CD4-positive, alpha-beta memory T cell (primary cell): ENCODE measurements at regions of chr17 and their contacts with region 1.

Region 1: DNA sequence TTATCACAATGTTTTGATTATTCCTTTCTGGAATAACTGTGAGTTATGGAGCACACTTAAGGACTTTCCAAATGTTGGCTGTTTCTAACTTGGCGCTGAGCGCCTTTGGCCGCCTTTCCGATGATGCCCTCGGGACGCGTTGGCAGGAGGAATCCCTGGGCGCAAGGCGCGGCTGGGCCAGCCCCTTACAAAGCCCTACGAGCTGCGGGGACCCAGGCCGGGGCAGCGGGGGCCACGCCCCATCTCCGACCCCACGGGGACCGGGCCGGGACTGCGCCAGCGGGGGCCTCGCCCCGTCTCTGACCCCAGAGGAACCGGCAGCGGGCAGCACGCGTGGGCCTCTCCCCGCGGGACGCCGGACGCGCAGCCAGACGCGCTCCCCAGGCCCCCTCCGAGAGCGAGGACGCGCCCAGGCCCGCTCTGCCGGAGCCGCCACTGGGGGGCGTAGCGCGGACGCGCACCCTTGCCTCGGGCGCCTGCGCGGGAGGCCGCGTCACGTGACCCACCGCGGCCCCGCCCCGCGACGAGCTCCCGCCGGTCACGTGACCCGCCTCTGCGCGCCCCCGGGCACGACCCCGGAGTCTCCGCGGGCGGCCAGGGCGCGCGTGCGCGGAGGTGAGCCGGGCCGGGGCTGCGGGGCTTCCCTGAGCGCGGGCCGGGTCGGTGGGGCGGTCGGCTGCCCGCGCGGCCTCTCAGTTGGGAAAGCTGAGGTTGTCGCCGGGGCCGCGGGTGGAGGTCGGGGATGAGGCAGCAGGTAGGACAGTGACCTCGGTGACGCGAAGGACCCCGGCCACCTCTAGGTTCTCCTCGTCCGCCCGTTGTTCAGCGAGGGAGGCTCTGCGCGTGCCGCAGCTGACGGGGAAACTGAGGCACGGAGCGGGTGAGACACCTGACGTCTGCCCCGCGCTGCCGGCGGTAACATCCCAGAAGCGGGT is at the start of gene GAA:
- DNase-seq: peak; percentile 79 to 93 (median 89)
- H3K4me3 ChIP-seq: peak within 1 kb of the TSS; percentile 52 to 82
- H3K4me3 Mint-ChIP-seq: peak within 1 kb of the TSS; percentile 87 to 92 (median 90)
- H3K27ac ChIP-seq: peak within 1 kb of the TSS; percentile 76
- H3K27ac Mint-ChIP-seq: peak within 1 kb of the TSS; percentile 80 to 94 (median 88)
- H3K4me1 ChIP-seq: peaks cover 20% of the 10 kb centered on the region
- H3K4me1 Mint-ChIP-seq: peaks cover 12 to 31% (median 16%) of the 10 kb centered on the region in 4 donors
- H3K27me3 ChIP-seq: no peaks in the 10 kb centered on the region
- H3K27me3 Mint-ChIP-seq: peaks cover 0 to 2% of the 10 kb centered on the region in 2 donors
- total RNA-seq, gene GAA: 41.1 to 44.8 TPM

Region 2: GRCh38 chr17:79883202-79883601 is 218.1 kb before region 1 on chr17:
- CTCF ChIA-PET with region 1: no interaction called
- POLR2A ChIA-PET with region 1: no interaction called
- intact Hi-C with region 1: no loop called
- DNase-seq: no peak
- H3K4me3 ChIP-seq: no peak overlapping the region
- H3K4me3 Mint-ChIP-seq: no peak overlapping the region
- H3K27ac ChIP-seq: no peak overlapping the region
- H3K27ac Mint-ChIP-seq: no peak overlapping the region
- H3K4me1 ChIP-seq: no peaks in the 10 kb centered on the region
- H3K4me1 Mint-ChIP-seq: no peaks in the 10 kb centered on the region
- H3K27me3 ChIP-seq: no peaks in the 10 kb centered on the region
- H3K27me3 Mint-ChIP-seq: peaks cover 28 to 43% of the 10 kb centered on the region in 2 donors

Region 3: DNA sequence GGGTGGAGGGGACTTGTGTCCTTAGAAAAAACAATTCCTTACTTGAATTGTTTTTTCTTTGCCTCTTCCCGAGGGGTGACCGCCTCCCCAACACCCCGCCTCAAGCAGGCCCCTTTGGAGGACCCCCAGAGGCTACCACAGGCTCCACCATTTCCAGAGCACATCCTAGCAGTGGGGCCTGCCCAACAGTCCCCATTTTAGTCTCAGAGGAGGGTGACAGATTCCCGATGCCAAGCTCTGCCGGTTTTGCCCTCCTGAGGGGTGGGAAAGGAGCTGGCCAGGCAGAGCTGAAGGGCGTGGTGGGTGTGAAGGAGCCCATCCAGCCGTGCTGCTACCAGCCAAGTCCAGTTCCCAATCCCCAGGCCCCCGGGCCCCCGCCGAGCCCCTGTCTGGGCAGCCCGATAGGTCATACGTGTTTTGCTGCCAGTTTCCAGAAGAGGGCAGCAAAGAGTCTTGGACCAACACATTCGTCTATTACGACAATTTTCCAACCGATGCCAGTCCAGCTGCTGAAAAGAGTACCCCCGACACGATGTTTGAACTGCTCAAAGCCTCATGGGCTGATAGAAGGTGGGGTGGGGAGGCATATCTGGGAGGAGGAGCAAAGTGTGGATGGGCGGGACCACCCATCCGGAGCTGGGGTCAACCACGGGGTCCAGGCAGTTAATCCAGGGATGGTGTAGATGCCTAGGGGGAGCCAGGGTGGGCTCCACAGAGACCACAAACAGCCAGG is 18.7 kb before region 1 on chr17:
- CTCF ChIA-PET with region 1: interaction called, 10 read pairs
- POLR2A ChIA-PET with region 1: interaction called, 4 read pairs
- intact Hi-C with region 1: no loop called
- DNase-seq: peak; percentile 50 to 67 (median 60)
- H3K4me3 ChIP-seq: no peak overlapping the region
- H3K4me3 Mint-ChIP-seq: no peak overlapping the region
- H3K27ac ChIP-seq: no peak overlapping the region
- H3K27ac Mint-ChIP-seq: peak overlapping the region in 1 of 7 donors; percentile 52
- H3K4me1 ChIP-seq: peaks cover 6% of the 10 kb centered on the region
- H3K4me1 Mint-ChIP-seq: peaks cover 0 to 6% (median 3%) of the 10 kb centered on the region in 4 donors
- H3K27me3 ChIP-seq: no peaks in the 10 kb centered on the region
- H3K27me3 Mint-ChIP-seq: peaks cover 5 to 7% of the 10 kb centered on the region in 2 donors

Region 4: DNA sequence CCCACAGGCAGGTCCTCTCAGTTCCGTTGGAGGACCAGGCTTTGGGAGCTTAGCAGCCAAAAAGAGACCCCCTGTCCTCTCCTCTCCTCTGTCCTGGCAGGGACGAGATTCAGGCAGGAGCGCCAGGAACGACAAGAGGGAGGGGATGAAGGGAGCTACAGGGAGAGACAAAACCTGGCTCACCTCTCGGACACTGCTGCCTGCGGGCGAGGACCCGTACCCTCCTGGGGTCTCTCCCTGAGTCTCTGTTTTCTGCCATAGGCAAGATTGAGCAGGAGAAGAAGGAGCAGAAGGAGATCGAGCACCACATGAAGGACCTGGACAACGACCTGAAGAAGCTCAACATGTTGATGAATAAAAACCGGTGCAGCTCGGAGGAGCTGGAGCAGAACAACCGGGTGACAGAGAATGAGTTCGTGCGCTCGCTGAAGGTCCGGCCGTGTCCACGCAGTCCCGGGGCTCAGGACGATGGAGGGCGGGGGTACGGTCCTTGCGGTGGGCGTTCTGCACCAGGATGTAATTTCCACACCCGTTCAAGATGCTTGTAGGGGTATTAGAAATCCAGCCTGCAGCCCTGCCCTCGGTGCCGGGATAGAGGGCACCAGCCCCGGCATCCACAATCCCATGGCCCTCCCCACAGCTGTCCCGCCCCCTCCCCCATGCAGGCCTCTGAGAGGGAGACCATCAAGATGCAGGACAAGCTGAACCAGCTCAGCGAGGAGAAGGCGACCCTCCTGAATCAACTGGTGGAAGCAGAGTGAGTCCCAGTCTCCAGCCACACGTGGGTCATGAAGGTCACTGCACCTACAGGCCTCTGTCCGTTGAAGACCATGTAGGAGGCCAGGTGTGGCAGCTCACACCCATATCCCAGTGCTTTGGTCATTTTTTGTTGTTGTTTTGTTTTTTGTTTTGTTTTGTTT is 13.7 kb before region 1 on chr17:
- CTCF ChIA-PET with region 1: interaction called, 10 read pairs
- POLR2A ChIA-PET with region 1: interaction called, 4 read pairs
- intact Hi-C with region 1: no loop called
- DNase-seq: no peak
- H3K4me3 ChIP-seq: no peak overlapping the region
- H3K4me3 Mint-ChIP-seq: no peak overlapping the region
- H3K27ac ChIP-seq: no peak overlapping the region
- H3K27ac Mint-ChIP-seq: peak overlapping the region in 1 of 7 donors; percentile 29
- H3K4me1 ChIP-seq: peaks cover 3% of the 10 kb centered on the region
- H3K4me1 Mint-ChIP-seq: peaks cover 0 to 3% (median 2%) of the 10 kb centered on the region in 4 donors
- H3K27me3 ChIP-seq: no peaks in the 10 kb centered on the region
- H3K27me3 Mint-ChIP-seq: peaks cover 2 to 5% of the 10 kb centered on the region in 2 donors

Region 5: DNA sequence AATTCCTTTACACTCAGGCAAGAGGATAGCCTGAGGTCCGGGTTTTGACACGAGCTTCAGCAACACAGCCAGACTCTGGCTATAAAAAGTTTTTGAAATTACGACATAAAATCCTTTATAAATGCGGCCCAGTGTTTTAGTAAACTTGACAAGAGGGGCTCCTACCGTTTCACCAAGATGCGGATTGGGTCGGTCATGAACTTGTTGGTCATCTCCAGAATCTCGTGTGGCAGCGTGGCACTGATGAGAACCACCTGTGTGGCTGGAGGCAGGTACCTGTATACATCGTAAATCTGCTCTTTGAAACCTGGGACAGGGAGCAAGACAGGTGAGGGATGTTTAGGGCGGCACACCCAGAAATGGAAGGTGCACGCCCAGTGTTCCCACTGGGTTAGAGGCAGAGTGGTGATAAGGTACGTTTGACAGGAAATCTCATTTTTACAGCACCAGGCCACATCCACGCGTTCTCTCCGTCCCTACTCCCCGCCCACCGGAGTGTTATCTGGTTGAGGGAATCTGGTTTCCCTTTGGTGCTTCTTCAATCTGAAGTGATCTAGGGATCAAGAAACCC is 37.7 kb after region 1 on chr17:
- CTCF ChIA-PET with region 1: interaction called, 16 read pairs
- POLR2A ChIA-PET with region 1: no interaction called
- intact Hi-C with region 1: no loop called
- DNase-seq: no peak
- H3K4me3 ChIP-seq: no peak overlapping the region
- H3K4me3 Mint-ChIP-seq: no peak overlapping the region
- H3K27ac ChIP-seq: no peak overlapping the region
- H3K27ac Mint-ChIP-seq: no peak overlapping the region
- H3K4me1 ChIP-seq: no peaks in the 10 kb centered on the region
- H3K4me1 Mint-ChIP-seq: no peaks in the 10 kb centered on the region
- H3K27me3 ChIP-seq: no peaks in the 10 kb centered on the region
- H3K27me3 Mint-ChIP-seq: no peaks in the 10 kb centered on the region

Region 6: DNA sequence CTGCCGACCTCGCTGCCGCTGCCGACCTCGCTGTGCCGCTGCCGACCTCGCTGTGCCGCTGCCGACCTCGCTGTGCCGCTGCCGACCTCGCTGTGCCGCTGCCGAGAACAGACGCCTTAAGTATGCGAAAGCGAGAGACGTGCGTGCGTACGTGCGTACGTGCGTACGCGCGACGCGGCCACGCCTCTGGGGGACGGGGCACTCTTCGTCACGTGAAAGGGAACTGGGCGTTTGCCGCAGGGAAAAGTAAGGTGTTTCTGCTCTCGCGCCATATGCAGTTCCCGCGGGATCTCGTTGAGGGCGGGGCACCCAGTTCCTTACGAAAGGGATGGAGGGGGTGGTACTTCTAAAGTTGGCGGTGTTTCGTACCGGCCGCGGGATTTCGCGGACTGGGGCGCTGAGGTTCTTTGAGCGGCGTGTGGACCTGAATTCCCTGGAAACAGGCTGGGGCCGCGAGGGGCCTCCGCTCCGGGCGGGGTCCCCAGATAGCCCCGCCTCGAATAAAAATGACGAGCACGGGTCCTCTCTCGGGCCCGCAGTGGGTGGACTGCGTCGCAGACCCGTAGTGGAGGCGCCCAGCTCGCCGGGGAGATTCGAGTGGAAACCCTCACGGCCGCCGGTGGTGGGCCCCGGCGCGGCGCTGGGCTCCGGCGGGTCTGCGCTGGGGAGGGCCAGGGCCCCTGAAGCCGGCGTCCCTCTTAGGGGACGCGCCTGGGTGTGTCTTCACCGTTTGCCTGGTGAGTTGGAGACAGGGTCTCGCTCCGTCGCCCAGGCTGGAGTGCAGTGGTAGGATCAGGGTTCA is 46.0 kb after region 1 on chr17 and contains the start of gene EIF4A3:
- CTCF ChIA-PET with region 1: interaction called, 16 read pairs
- POLR2A ChIA-PET with region 1: interaction called, 36 read pairs
- intact Hi-C with region 1: loop called (anchors 2 kb)
- DNase-seq: peak; percentile 95 to 99 (median 97)
- H3K4me3 ChIP-seq: peak within 1 kb of the TSS; percentile 48 to 94
- H3K4me3 Mint-ChIP-seq: peak within 1 kb of the TSS; percentile 93 to 99 (median 98)
- H3K27ac ChIP-seq: peak within 1 kb of the TSS; percentile 83
- H3K27ac Mint-ChIP-seq: peak within 1 kb of the TSS; percentile 90 to 99 (median 98)
- H3K4me1 ChIP-seq: peaks cover 36% of the 10 kb centered on the region
- H3K4me1 Mint-ChIP-seq: peaks cover 23 to 54% (median 35%) of the 10 kb centered on the region in 4 donors
- H3K27me3 ChIP-seq: no peaks in the 10 kb centered on the region
- H3K27me3 Mint-ChIP-seq: no peaks in the 10 kb centered on the region
- total RNA-seq, gene EIF4A3: 54.2 to 56.0 TPM

Region 7: DNA sequence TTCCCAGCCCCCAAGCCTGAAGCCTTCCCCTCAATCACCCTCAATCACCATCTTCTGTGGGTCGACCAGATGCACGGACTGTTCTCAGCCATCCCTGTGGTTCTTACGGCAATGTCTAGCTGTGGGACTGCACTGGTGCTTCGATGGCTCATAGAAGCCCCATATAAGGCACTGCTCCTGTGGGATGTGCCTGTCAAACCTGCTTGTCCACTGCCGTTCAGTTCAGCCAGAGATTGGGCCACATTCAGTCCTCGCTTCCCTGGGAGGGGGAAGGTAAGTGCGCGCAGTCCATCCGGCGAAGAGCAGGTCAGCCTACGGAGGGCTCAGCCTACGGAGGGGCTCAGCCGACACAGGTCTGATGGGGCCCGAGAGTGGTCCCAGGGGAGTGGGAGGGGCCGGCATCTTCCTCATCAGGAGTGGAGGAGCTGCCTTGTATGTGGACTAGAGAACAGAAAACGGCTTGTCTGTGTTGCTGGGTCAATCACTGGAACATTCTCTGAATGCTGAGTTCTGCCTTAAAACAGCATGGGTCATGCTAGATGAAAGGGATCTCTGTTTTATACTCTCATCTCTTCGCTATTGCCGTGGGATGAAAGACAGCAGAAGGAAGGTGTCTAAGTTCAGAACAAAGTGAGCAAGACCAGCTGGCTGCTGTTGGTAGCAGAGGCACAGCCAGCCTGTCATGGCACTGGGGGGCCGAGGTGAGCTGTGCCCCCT is 68.7 kb after region 1 on chr17 and contains the start of gene CARD14:
- CTCF ChIA-PET with region 1: no interaction called
- POLR2A ChIA-PET with region 1: no interaction called
- intact Hi-C with region 1: no loop called
- DNase-seq: no peak
- H3K4me3 ChIP-seq: no peak within 1 kb of the TSS
- H3K4me3 Mint-ChIP-seq: peak within 1 kb of the TSS in 1 of 8 donors; percentile 41
- H3K27ac ChIP-seq: no peak within 1 kb of the TSS
- H3K27ac Mint-ChIP-seq: peak within 1 kb of the TSS in 1 of 7 donors; percentile 8
- H3K4me1 ChIP-seq: no peaks in the 10 kb centered on the region
- H3K4me1 Mint-ChIP-seq: no peaks in the 10 kb centered on the region
- H3K27me3 ChIP-seq: no peaks in the 10 kb centered on the region
- H3K27me3 Mint-ChIP-seq: peaks cover 1 to 13% of the 10 kb centered on the region in 2 donors
- total RNA-seq, gene CARD14: 0.09 TPM in 1 of 2 experiments, not detected in the other

Region 8: DNA sequence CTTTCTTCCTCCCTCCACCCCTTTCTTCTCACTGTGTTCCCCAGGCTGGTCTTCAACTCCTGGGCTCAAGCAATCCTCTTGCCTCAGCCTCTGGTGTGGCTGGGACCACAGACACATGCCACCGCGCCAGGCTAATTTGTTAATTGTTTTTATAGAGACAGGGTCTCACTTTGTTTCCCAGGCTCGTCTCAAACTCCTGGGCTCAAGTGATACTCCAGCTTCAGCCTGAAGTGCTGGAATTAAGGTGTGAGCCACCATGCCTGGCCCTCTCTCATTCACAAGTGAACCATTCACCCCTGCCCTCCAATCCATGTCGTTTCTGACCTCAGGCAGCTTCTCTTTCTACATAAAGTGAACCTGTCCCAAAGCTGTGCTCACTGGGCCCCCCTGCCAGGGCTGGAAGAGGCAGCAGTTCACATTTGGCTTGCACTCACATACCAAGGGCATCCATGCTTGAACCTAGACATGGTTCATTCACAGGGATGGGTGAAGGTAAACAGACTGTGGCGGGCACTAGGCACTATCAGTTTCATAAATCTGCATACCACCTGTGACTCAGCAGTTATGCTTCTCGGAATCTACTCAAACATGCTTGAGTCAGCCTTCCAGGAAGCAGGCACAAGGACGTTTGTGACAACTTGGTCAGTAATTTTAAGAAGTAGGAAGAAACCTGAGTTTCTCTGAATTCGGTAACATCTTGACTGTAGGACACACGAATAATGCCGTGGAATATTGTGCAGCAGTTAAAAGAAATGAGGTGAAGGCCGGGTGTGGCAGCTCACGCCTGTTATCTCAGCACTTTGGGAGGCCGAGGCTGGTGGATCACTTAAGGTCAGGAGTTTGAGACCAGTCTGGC is 153.3 kb after region 1 on chr17:
- CTCF ChIA-PET with region 1: interaction called, 3 read pairs
- POLR2A ChIA-PET with region 1: interaction called, 4 read pairs
- intact Hi-C with region 1: loop called (anchors 1 kb)
- DNase-seq: peak; percentile 52 to 79 (median 58)
- H3K4me3 ChIP-seq: no peak overlapping the region
- H3K4me3 Mint-ChIP-seq: peak overlapping the region; percentile 6 to 79 (median 51)
- H3K27ac ChIP-seq: peak overlapping the region; percentile 29
- H3K27ac Mint-ChIP-seq: peak overlapping the region; percentile 86 to 94 (median 90)
- H3K4me1 ChIP-seq: peaks cover 43% of the 10 kb centered on the region
- H3K4me1 Mint-ChIP-seq: peaks cover 27 to 58% (median 41%) of the 10 kb centered on the region in 4 donors
- H3K27me3 ChIP-seq: no peaks in the 10 kb centered on the region
- H3K27me3 Mint-ChIP-seq: no peaks in the 10 kb centered on the region